HEK293 (cell line): ENCODE measurements at regions of chr3 and their contacts with region 1.

Region 1: GRCh38 chr3:171829841-171830517 is 13.2 kb upstream of the TMEM212 start:
- H3K4me3 ChIP-seq: no peak overlapping the region
- H3K27ac ChIP-seq: no peak overlapping the region
- H3K4me1 ChIP-seq: peaks cover 6% of the 10 kb centered on the region
- CTCF ChIP-seq: peak; percentile 84; the same call in 1 of the 2 replicates

Region 2: GRCh38 chr3:171809821-171810628 is 20.0 kb before region 1 on chr3 and contains the start of gene PLD1:
- CTCF ChIA-PET with region 1: interaction called, 19 read pairs
- POLR2A ChIA-PET with region 1: no interaction called
- H3K4me3 ChIP-seq: peak within 1 kb of the TSS; percentile 63
- H3K27ac ChIP-seq: peak within 1 kb of the TSS; percentile 84
- H3K4me1 ChIP-seq: peaks cover 4% of the 10 kb centered on the region; the same call in 1 of the 2 replicates
- CTCF ChIP-seq: no peak

Region 3: GRCh38 chr3:171932153-171932611 is 102.2 kb after region 1 on chr3:
- CTCF ChIA-PET with region 1: no interaction called
- POLR2A ChIA-PET with region 1: no interaction called
- H3K4me3 ChIP-seq: no peak overlapping the region
- H3K27ac ChIP-seq: no peak overlapping the region
- H3K4me1 ChIP-seq: no peaks in the 10 kb centered on the region
- CTCF ChIP-seq: no peak